CD4-positive, alpha-beta T cell (primary cell): ENCODE measurements at regions of chr14 and their contacts with region 1.

Region 1: DNA sequence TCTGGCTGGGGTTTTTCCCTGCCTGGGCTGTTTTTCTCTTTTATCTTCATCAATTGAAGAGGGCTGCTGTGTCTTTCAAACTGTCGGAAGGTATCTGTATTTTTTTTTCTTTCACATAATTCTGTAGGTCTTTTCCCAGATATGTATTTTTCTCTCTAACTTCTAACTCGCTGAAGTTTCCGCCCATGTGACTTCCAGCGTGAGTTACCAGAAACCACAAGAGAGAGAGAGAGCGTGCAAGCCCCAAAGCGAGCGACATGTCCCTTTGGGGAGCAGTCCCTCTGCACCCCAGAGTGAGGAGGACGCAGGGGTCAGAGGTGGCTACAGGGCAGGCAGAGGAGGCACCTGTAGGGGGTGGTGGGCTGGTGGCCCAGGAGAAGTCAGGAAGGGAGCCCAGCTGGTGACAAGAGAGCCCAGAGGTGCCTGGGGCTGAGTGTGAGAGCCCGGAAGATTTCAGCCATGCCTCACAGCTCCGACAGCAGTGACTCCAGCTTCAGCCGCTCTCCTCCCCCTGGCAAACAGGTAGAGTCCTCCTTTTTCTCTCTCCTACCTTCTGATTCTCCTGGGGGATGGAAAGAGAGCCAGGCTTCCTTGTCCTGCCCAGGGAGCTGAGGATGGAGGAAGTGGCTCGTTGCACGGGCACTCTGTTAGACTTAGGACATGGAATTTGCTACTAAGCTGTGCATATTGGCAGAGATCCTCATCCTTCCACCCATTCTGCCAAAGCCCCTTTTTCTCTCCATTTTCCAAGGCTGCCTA is at the start of gene BATF:
- DNase-seq: peak; percentile 57 to 91 (median 69)
- ATAC-seq: peak; percentile 80
- H3K4me3 ChIP-seq: peak within 1 kb of the TSS; percentile 67
- H3K4me3 Mint-ChIP-seq: peak within 1 kb of the TSS; percentile 100
- H3K27ac ChIP-seq: peak within 1 kb of the TSS; percentile 76 to 87
- H3K27ac Mint-ChIP-seq: peak within 1 kb of the TSS; percentile 96
- H3K4me1 ChIP-seq: peaks cover 69% of the 10 kb centered on the region
- H3K4me1 Mint-ChIP-seq: peaks cover 81% of the 10 kb centered on the region
- H3K27me3 ChIP-seq: no peaks in the 10 kb centered on the region
- H3K27me3 Mint-ChIP-seq: no peaks in the 10 kb centered on the region
- CTCF ChIP-seq: no peak
- total RNA-seq, gene BATF: 6.7 to 7.8 TPM

Region 2: GRCh38 chr14:75533791-75534555 is 11.6 kb after region 1 on chr14:
- CTCF ChIA-PET with region 1: interaction called, 8 read pairs
- POLR2A ChIA-PET with region 1: interaction called, 28 read pairs
- intact Hi-C with region 1: no loop called
- DNase-seq: no peak
- ATAC-seq: no peak
- H3K4me3 ChIP-seq: no peak overlapping the region
- H3K4me3 Mint-ChIP-seq: peak overlapping the region; percentile 20
- H3K27ac ChIP-seq: peak overlapping the region; percentile 32
- H3K27ac Mint-ChIP-seq: peak overlapping the region; percentile 89
- H3K4me1 ChIP-seq: peaks cover 31% of the 10 kb centered on the region
- H3K4me1 Mint-ChIP-seq: peaks cover 61% of the 10 kb centered on the region
- H3K27me3 ChIP-seq: no peaks in the 10 kb centered on the region
- H3K27me3 Mint-ChIP-seq: no peaks in the 10 kb centered on the region
- CTCF ChIP-seq: no peak

Region 3: DNA sequence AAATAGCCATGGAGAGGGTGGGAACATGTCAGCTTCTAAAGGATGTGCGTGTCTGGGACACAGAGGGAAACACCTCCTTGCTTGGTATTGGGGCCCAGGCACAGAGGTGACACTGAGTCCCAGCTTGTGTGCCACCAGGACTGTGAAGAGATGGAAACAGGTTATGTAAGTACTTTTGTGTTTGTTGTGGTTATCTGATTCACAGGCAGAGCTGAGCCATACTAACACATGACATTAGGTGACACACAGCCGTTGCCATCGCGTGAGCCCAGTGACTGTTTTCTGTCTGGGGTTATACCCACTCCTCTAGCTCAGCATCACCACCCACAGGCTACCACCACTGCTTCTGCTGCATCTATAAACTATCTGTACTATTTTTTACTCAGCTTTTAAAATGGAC is 43.9 kb after region 1 on chr14:
- CTCF ChIA-PET with region 1: interaction called, 18 read pairs
- POLR2A ChIA-PET with region 1: interaction called, 8 read pairs
- intact Hi-C with region 1: loop called (anchors 1 to 2 kb)
- DNase-seq: peak; percentile 43 to 90 (median 68)
- ATAC-seq: peak; percentile 98
- H3K4me3 ChIP-seq: no peak overlapping the region
- H3K4me3 Mint-ChIP-seq: peak overlapping the region; percentile 26
- H3K27ac ChIP-seq: no peak overlapping the region
- H3K27ac Mint-ChIP-seq: peak overlapping the region; percentile 88
- H3K4me1 ChIP-seq: peaks cover 27% of the 10 kb centered on the region
- H3K4me1 Mint-ChIP-seq: peaks cover 33% of the 10 kb centered on the region
- H3K27me3 ChIP-seq: no peaks in the 10 kb centered on the region
- H3K27me3 Mint-ChIP-seq: no peaks in the 10 kb centered on the region
- CTCF ChIP-seq: no peak